ENCODE measurements at regions of chr3 and their contacts with region 1.

Region 1: DNA sequence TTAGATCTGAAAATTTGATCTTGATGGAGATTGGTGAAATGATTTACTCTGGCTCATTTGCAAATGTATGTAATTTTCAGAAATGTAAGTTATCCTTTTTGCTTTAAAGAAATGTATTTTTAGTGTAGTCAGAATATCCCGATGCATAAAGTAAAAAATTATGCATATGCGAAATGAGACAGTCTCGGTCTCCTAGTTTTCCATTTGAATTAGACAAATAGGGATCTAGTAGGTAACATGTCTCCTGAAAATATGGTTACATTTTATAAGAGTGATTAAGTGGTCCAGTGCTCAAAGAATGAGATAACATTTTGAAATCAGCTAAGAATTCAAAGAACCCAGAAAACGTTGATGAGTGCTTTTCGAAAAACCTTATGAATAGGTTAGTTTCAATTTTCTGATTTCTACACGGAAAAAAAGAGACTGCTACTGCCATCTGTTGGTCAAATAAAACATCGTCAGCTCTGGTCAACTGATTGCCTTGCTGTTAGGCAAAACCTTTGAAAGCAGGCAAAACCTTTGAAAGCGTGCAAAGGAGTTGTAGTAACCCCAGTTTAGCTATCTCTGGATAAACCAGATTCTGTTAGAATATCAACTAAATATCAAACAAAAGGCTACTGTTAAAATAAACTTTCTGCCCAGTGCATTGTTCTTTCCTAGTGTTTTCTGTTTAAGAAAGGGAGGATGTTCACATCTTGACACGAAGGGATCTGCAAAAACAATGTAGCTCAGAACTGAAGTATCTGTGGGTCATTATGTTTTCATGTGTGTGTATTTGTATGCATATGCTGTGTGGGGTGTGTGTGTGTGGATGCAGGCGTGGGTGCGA is 59.3 kb upstream of the CHMP2B start:
- DNase-seq: no peak
- H3K4me3 ChIP-seq: peak overlapping the region in 2 of 4 donors; percentile 17 to 42
- H3K27ac ChIP-seq: no peak overlapping the region
- H3K4me1 ChIP-seq: no peaks in the 10 kb centered on the region
- H3K27me3 ChIP-seq: peaks cover 9% of the 10 kb centered on the region
- CTCF ChIP-seq: peak; percentile 39 to 69 (median 59)
- EP300 ChIP-seq: no peak
- POLR2A ChIP-seq: no peak

Region 2: GRCh38 chr3:86774082-86774691 is 393.7 kb before region 1 on chr3:
- in situ Hi-C with region 1: loop called in 1 of 4 experiments (anchors 25 kb)
- intact Hi-C with region 1: no loop called
- DNase-seq: no peak
- H3K4me3 ChIP-seq: no peak overlapping the region
- H3K27ac ChIP-seq: no peak overlapping the region
- H3K4me1 ChIP-seq: no peaks in the 10 kb centered on the region
- H3K27me3 ChIP-seq: no peaks in the 10 kb centered on the region
- CTCF ChIP-seq: peak; percentile 31 to 47 (median 40)
- EP300 ChIP-seq: no peak
- POLR2A ChIP-seq: no peak

Region 3: GRCh38 chr3:86969500-86970189 is 198.2 kb before region 1 on chr3:
- in situ Hi-C with region 1: no loop called
- intact Hi-C with region 1: no loop called
- DNase-seq: no peak
- H3K4me3 ChIP-seq: no peak overlapping the region
- H3K27ac ChIP-seq: no peak overlapping the region
- H3K4me1 ChIP-seq: no peaks in the 10 kb centered on the region
- H3K27me3 ChIP-seq: no peaks in the 10 kb centered on the region
- CTCF ChIP-seq: peak; percentile 37 to 61 (median 55)
- EP300 ChIP-seq: no peak
- POLR2A ChIP-seq: no peak

Region 4: GRCh38 chr3:87088993-87089841 is 78.6 kb before region 1 on chr3:
- in situ Hi-C with region 1: no loop called
- intact Hi-C with region 1: loop called (anchors 2 kb)
- DNase-seq: peak; percentile 37
- H3K4me3 ChIP-seq: peak overlapping the region; percentile 40 to 58 (median 44)
- H3K27ac ChIP-seq: peak overlapping the region; percentile 53 to 86 (median 72)
- H3K4me1 ChIP-seq: peaks cover 0 to 8% (median 2%) of the 10 kb centered on the region in 4 donors
- H3K27me3 ChIP-seq: no peaks in the 10 kb centered on the region
- CTCF ChIP-seq: no peak
- EP300 ChIP-seq: no peak
- POLR2A ChIP-seq: peak; percentile 39

Measured in transverse colon (tissue), 4 donors.